ENCODE measurements at regions of chr12 and their contacts with region 1.

Region 1: DNA sequence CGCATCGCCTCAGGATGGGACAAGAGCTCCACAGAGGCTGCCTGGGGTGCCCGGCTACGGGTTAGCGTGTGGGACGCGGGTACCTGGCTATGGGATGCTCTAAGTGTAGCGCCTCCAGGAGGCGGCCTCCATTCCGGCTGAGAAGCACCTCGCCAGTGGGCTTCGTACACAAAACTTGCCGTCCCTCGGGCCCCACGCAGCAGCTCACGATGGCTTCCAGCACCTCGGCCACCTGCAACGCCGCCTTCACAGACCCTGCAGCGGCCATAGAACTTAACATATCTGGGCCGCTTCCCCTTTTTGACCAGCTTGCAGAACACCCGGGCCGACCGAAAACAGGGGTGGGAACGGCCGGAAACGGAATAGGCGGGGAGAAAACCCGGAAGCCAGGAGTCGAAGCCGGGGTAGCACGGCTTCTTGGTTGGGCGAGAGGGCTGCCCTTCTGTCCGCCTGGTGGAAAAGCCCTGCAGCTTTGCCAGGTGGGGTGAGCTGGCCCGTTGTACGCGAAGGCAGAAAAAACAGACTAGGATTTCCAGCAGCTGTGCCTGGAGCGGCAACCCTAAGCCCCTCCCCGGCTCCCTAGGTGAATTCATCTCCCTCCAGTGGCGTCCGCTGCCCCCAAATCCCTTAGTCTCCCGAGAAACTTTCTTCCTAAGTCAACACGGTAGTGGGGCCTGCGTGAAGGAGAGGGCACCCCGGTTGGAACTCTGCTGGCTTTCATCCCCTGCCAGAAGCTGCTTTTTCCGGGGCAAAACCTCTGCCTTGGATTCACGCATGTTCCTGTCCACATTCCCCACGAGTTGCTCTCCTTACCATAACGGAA is at the start of gene BBS10:
- DNase-seq: peak; percentile 90
- H3K4me3 ChIP-seq: peak within 1 kb of the TSS; percentile 27 to 86 (median 82)
- H3K27ac ChIP-seq: peak within 1 kb of the TSS; percentile 44
- H3K4me1 ChIP-seq: peaks cover 18% of the 10 kb centered on the region
- H3K27me3 ChIP-seq: no peaks in the 10 kb centered on the region
- CTCF ChIP-seq: peak; percentile 24 to 66
- POLR2A ChIP-seq: peak; percentile 81
- total RNA-seq, gene BBS10: 7.5 and 7.8 TPM in 2 replicates

Region 2: GRCh38 chr12:75334384-75335030 is 1013.8 kb before region 1 on chr12 and contains the start of gene GLIPR1L1:
- CTCF ChIA-PET with region 1: no interaction called
- POLR2A ChIA-PET with region 1: no interaction called
- dilution Hi-C with region 1: no loop called
- intact Hi-C with region 1: loop called (anchors 5 kb)
- DNase-seq: peak; percentile 88
- H3K4me3 ChIP-seq: peak within 1 kb of the TSS; percentile 20 to 58 (median 56)
- H3K27ac ChIP-seq: no peak within 1 kb of the TSS
- H3K4me1 ChIP-seq: peaks cover 10% of the 10 kb centered on the region
- H3K27me3 ChIP-seq: peaks cover 2 to 13% of the 10 kb centered on the region in 2 experiments
- CTCF ChIP-seq: peak; percentile 85 to 91
- POLR2A ChIP-seq: no peak
- total RNA-seq, gene GLIPR1L1: not detected in 2 replicates

Region 3: DNA sequence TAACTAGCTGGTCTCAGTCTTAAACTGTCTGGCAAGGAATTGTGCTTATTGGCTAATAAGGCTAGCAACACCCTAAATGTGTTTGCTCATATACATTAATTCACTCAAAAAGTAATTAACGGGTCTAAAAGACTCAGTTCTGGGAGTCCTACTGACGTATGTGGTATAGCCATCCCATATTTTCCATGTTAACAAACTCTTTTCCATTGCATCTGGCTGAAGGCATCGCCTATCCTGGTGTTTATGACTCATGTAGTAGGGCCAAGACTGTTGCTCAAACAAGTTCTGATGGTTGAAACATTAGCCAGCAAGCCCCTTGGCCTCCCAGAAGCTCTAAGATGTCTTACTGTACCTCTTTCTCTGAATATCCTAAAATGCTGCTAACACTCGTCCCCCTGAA is 415.2 kb before region 1 on chr12:
- CTCF ChIA-PET with region 1: no interaction called
- POLR2A ChIA-PET with region 1: no interaction called
- dilution Hi-C with region 1: no loop called
- intact Hi-C with region 1: no loop called
- DNase-seq: peak; percentile 27
- H3K4me3 ChIP-seq: no peak overlapping the region
- H3K27ac ChIP-seq: no peak overlapping the region
- H3K4me1 ChIP-seq: peaks cover 20% of the 10 kb centered on the region
- H3K27me3 ChIP-seq: peaks cover 13% of the 10 kb centered on the region in 2 experiments
- CTCF ChIP-seq: no peak
- POLR2A ChIP-seq: no peak

Region 4: DNA sequence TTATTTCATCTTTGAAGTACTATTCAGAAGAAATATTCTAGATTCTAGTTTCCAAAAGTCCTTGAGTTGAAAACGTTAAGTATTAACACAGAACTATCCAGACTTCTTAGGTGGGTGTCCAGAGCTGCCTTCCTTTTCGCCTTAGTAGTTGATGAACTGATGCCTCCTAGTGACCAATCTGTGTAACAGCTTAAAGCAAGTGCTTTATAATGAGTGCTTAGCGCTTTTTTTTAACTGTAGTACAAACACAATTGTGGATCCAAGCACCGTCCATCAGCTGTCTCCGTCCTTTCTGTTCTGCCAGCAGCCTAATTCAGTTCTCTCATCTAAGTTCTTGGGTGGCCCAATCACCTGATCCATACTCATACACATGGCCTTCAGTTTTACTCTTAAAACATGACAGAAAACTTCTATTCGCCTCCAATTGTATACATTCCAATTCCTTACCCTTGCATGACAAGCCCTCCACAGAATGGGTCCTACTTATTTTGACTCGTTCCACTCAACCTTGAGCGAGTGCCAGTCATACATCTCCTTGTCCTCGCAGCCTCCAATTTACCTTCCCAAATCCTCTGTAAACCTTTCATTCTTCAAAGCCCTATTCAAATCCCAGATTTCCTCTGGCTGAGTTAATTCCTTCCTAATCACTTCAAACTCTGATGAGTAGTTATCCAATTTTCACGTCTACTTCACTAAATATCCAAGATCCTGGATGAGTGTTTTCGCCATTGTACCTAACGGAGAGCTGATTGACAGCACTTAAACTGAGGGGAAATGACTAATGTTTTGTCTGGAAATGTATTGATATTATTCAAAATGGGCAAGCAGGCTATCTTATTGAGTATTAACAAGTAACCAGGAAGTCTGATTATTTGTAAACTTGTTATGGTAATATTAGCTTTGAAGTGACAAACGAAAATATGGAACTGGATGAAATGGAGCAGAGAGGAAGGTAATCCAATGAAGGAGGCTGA is 310.9 kb before region 1 on chr12:
- CTCF ChIA-PET with region 1: interaction called, 23 read pairs
- POLR2A ChIA-PET with region 1: no interaction called
- dilution Hi-C with region 1: no loop called
- intact Hi-C with region 1: loop called (anchors 1 kb)
- DNase-seq: peak; percentile 87
- H3K4me3 ChIP-seq: peak overlapping the region in 1 of 3 experiments; percentile 45
- H3K27ac ChIP-seq: peak overlapping the region; percentile 88
- H3K4me1 ChIP-seq: peaks cover 26% of the 10 kb centered on the region
- H3K27me3 ChIP-seq: no peaks in the 10 kb centered on the region
- CTCF ChIP-seq: peak; percentile 68 to 79
- POLR2A ChIP-seq: peak; percentile 60

Region 5: GRCh38 chr12:76123451-76124212 is 224.7 kb before region 1 on chr12:
- CTCF ChIA-PET with region 1: no interaction called
- POLR2A ChIA-PET with region 1: no interaction called
- dilution Hi-C with region 1: no loop called
- intact Hi-C with region 1: loop called (anchors 2 kb)
- DNase-seq: peak; percentile 79
- H3K4me3 ChIP-seq: peak overlapping the region in 1 of 3 experiments; percentile 49
- H3K27ac ChIP-seq: peak overlapping the region; percentile 89
- H3K4me1 ChIP-seq: peaks cover 18% of the 10 kb centered on the region
- H3K27me3 ChIP-seq: no peaks in the 10 kb centered on the region
- CTCF ChIP-seq: no peak
- POLR2A ChIP-seq: no peak

Region 6: DNA sequence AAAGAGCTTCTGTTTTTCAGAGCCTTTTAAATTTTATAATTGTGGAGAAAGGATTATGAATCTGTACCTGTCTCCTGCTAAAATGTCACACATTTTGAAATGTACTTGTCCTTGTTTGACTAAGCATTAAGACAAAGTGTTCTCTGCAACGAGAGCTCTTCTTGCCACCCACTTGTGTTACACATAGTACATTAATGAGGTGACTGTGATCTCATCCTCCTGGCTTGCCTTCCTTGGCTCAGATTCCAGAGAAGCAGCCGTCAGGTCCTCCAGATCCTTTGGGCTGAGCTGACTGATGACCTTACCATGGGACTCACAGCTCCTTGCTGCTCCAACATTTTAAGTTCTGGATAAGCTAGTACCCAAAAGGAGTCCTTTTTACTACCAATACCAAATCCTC is 81.5 kb before region 1 on chr12:
- CTCF ChIA-PET with region 1: interaction called, 13 read pairs
- POLR2A ChIA-PET with region 1: no interaction called
- dilution Hi-C with region 1: no loop called
- intact Hi-C with region 1: no loop called
- DNase-seq: peak; percentile 64
- H3K4me3 ChIP-seq: no peak overlapping the region
- H3K27ac ChIP-seq: peak overlapping the region; percentile 51
- H3K4me1 ChIP-seq: peaks cover 34% of the 10 kb centered on the region
- H3K27me3 ChIP-seq: no peaks in the 10 kb centered on the region
- CTCF ChIP-seq: no peak
- POLR2A ChIP-seq: no peak

Region 7: GRCh38 chr12:76455582-76456345 is 107.5 kb after region 1 on chr12:
- CTCF ChIA-PET with region 1: interaction called, 37 read pairs
- POLR2A ChIA-PET with region 1: no interaction called
- dilution Hi-C with region 1: no loop called
- intact Hi-C with region 1: loop called (anchors 1 kb)
- DNase-seq: peak; percentile 82
- H3K4me3 ChIP-seq: no peak overlapping the region
- H3K27ac ChIP-seq: peak overlapping the region; percentile 48
- H3K4me1 ChIP-seq: peaks cover 9% of the 10 kb centered on the region
- H3K27me3 ChIP-seq: no peaks in the 10 kb centered on the region
- CTCF ChIP-seq: peak; percentile 48 to 54
- POLR2A ChIP-seq: no peak